AG04449 (cell line): ENCODE measurements at regions of chr3 and their contacts with region 1.

Region 1: DNA sequence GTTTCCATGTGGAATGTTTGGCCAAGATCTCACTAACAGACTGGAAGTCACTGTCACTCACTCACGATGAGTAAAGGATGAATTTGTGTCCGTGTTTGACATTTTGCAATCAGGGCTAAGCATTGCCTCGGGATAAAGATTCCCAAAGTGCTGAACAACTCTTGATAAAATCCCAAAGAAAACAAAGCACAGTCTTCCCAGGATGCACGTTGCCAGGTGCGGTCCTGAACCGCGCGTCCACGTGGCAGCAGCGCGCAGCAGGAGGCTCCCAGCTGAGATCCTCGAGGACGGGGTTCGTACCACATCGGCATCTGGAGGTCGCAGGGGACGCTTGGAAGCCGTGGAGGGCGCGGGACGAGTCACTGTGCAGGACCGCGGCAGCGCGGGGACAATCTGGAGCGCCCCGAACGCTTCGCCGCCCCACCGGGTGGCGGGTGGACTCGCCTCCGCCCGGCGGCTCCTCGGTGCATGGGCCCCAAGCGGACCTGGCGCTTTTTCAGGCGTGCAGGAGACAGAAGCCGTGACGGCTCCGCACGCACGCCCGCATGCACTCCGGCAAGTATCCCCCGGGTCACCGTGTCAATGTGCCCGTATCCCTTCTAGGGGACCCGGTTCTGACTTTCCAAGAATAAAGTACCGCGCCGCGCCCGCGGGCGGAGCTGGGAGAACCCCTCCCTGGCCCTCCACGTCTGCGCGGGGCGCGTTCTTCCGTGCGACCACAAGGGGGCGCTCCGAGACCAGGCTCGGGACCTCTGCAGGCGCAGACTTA is 17.7 kb downstream of the CPN2 start:
- DNase-seq: no peak
- H3K4me3 ChIP-seq: peak overlapping the region; percentile 68
- CTCF ChIP-seq: peak; percentile 92

Region 2: DNA sequence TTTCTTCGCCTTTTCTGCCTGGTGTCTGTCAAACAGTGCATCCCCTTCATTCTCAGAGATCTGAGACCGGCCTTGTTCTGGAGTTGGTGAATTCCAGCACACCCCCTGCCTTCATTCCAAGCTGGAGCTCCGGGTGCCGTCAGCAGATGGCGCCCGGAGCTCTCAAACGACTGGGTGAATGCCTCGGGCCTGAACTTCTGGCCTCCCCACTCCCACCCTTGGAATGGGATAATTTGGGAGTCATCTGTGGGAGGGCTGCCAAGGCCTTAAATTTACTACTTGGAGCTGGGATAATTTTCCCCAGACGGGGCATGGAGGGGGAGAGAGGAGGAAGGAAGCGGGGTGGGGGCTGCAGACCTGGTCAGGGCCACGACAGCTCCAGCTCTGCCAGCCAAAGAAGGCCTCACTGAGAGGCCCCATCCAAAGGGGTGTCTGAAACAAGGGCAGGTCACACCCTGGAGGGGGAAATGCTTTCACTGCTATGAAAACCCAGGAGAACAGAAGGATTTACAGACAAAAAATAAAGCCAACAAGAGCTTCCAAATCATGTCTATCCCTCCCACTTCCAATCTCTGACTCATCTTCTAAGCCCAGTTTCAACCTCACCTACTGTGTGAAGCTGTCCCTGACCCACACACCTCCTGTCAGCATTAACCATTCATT is 552.5 kb before region 1 on chr3:
- CTCF ChIA-PET with region 1: interaction called, 11 read pairs
- POLR2A ChIA-PET with region 1: no interaction called
- DNase-seq: no peak
- H3K4me3 ChIP-seq: no peak overlapping the region
- CTCF ChIP-seq: peak; percentile 74

Region 3: DNA sequence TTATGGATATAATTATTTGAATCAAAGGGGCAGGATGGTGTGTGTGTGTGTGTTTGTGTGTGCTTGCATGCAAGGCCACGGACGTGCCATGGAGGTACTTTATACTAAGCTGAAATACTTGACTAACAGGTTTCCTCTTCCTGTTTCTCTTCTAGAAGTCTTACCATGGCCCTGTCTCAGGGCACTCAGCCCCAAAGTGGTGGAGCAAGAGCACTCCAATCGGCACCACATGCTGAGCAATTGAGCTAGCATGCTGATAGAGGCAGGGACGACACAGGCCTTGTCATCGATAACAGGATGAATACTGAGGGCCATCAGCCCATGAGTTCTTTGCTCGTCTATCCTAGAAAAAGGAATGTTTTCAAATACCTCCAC is 541.7 kb before region 1 on chr3:
- CTCF ChIA-PET with region 1: no interaction called
- POLR2A ChIA-PET with region 1: no interaction called
- DNase-seq: no peak
- H3K4me3 ChIP-seq: no peak overlapping the region
- CTCF ChIP-seq: no peak

Region 4: GRCh38 chr3:194224471-194225415 is 108.7 kb before region 1 on chr3:
- CTCF ChIA-PET with region 1: no interaction called
- POLR2A ChIA-PET with region 1: no interaction called
- DNase-seq: no peak
- H3K4me3 ChIP-seq: no peak overlapping the region
- CTCF ChIP-seq: no peak

Region 5: GRCh38 chr3:194296454-194297263 is 36.7 kb before region 1 on chr3:
- CTCF ChIA-PET with region 1: no interaction called
- POLR2A ChIA-PET with region 1: no interaction called
- DNase-seq: no peak
- H3K4me3 ChIP-seq: no peak overlapping the region; the same call in 1 of the 2 replicates
- CTCF ChIP-seq: no peak

Region 6: GRCh38 chr3:194306771-194307640 is 26.4 kb before region 1 on chr3:
- CTCF ChIA-PET with region 1: no interaction called
- POLR2A ChIA-PET with region 1: no interaction called
- DNase-seq: no peak
- H3K4me3 ChIP-seq: no peak overlapping the region
- CTCF ChIP-seq: no peak

Region 7: DNA sequence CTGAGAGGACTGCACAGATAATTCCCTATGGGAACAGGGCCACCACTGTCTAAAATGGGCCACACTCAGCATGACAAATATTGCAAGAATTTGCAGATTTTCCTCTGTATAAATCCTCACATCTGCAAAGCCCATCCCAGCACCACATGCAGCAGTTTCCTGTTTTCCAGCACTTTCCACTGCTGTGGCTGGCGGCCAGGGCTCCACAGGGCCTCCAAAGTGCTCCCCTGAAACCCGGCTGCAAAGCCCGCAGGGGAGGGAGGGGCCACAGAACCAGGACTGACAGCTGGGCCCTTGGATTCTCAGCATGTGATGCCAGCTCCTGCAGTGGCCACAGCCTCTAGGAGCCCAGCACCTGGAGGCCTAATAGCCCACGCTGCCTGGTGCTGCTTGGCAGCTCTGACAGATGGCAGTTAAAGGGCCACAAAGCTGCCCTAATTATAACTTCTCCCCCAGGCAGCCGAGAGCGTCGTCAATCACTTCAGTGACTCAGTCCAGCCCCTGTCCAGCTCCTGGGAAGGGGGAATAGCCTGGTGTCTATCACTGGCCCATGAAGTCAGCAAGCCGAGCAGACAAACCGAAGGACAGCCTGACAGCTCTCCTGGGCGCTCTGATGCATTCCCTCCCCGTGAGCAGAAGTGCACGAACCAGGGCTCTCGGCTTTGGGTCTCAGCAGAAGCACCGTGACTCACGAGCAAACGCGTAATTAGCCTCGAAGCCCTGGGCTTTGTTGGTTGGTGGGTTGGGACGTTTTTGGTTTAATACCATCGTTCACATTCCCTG is 31.4 kb after region 1 on chr3:
- CTCF ChIA-PET with region 1: interaction called, 274 read pairs
- POLR2A ChIA-PET with region 1: no interaction called
- DNase-seq: peak; percentile 69
- H3K4me3 ChIP-seq: peak overlapping the region; percentile 20
- CTCF ChIP-seq: no peak

Region 8: DNA sequence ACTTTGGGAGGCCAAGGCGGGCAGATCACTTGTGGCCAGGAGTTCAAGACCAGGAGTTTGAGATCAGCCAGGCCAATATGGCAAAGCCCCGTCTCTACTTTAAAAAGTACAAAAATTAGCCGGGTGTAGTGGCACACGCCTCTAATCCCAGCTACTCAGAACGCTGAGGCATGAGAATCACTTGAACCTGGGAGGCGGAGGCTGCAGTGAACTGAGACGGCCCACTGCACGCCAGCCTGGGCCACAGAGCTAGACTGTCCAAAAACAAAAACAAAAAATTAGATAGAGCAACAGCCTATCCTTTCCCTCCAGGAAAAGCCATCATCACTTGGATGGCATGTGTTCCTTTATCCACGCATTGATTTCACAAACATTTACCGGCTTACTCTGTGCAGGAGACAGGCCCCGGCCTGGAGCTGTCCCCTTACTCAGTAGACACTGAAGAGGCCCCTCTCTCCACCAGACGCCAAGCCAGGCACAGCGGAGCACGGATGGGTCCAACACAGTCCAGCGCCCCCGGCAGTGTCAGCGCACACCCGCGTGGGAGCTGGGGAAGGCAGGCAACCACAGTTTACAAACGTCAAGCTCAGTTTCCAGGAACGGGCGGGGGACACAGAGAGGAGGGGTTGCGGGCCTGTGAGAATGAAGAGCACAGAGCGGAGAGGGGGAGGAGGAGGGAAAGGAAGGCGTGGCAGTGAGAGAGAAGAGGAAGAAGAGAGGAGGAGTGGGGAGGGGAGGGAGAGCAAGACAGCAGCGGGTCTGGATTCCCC is 62.6 kb after region 1 on chr3:
- CTCF ChIA-PET with region 1: interaction called, 186 read pairs
- POLR2A ChIA-PET with region 1: no interaction called
- DNase-seq: no peak
- H3K4me3 ChIP-seq: no peak overlapping the region
- CTCF ChIP-seq: no peak

Region 9: DNA sequence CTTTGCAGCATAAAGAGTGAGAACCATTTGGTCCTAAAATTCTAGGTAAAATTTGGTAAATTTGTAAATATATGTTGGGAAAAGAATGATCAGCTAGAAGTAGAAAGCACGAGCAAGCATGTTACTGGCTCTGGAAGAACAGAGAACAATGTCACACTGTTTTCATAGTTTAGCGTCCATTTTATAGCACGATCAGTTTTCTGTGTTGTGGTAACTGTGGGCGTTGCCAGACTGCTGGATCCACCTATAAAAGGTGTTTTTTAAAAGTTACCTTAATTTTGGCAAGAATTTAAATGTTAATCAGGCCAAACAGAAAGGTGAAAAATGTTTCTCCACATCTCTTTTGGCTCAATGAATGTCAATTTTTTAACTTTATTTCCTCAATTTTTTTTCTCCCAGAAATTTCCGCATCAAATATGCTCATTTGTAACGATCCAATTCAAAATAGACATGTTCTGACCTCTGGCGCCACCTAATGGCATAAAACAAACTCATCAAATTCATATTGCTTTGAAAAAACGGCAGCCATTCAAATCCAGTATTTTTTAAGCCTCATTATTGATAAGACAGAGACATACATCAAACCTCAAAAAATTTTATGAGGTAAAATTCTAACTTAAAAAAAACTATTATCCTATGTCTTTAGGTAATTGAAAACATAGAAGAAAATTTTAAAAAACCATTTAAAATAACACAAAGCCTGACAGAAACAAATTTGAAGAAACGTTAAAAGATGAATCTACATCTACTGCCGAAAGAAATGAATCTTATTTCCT is 71.2 kb after region 1 on chr3:
- CTCF ChIA-PET with region 1: interaction called, 220 read pairs
- POLR2A ChIA-PET with region 1: no interaction called
- DNase-seq: no peak
- H3K4me3 ChIP-seq: no peak overlapping the region
- CTCF ChIP-seq: peak; percentile 42

Region 10: GRCh38 chr3:194640829-194641228 is 307.4 kb after region 1 on chr3:
- CTCF ChIA-PET with region 1: interaction called, 15 read pairs
- POLR2A ChIA-PET with region 1: no interaction called
- DNase-seq: no peak
- H3K4me3 ChIP-seq: no peak overlapping the region
- CTCF ChIP-seq: peak; percentile 21